Vagina (tissue), 2 donors: ENCODE measurements at regions of chr15 and their contacts with region 1.

Region 1: DNA sequence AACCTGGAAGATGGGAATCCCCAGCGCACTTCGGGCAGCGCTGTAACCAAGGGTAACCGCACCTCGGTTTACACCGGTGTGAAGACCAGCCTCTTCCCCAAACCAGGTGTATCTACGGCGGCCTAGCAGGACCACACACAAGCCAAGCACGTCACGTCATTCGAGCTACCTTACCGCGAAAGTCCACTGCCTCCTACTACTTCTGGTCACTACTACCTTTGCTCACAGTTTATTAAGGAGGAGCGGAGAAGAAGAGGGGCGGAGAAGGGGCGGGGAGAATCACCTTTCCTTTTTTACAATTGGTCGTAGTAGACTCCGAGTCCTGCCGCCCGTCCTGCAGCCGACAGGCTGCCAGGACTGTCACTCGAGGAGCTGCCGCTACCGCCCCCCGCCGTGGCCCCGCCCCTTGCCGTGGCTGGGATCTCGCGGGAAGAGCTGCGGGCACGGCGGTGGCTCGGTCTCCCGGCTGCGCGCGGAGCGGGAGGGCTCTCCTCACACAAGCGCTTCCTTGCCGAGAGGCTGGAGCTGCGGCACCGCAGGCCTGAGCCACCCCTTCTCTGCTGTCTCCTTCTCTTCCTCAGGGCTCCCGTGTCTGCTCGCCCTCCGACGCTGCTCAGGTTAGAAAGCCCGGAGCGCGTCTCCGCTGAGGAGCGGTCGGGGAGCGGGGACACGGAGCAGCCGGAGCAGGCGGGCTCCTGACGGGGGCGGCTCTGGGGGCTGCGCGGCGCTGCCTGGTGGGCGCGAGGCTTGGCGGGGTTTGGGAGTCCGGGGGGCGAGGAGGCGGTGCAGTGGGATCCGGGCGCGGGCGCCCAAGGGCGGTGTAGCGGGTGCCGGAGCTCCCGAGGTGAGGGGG is at the start of gene GLCE:
- DNase-seq: peak in 1 of 2 donors; percentile 96
- H3K4me3 ChIP-seq: peak within 1 kb of the TSS; percentile 81 to 94
- H3K27ac ChIP-seq: peak within 1 kb of the TSS; percentile 45
- H3K4me1 ChIP-seq: peaks cover 10% of the 10 kb centered on the region
- H3K27me3 ChIP-seq: no peaks in the 10 kb centered on the region
- CTCF ChIP-seq: peak in 1 of 3 experiments; percentile 1
- POLR2A ChIP-seq: peak in 1 of 2 donors; percentile 82
- total RNA-seq, gene GLCE: 16.5 TPM

Region 2: DNA sequence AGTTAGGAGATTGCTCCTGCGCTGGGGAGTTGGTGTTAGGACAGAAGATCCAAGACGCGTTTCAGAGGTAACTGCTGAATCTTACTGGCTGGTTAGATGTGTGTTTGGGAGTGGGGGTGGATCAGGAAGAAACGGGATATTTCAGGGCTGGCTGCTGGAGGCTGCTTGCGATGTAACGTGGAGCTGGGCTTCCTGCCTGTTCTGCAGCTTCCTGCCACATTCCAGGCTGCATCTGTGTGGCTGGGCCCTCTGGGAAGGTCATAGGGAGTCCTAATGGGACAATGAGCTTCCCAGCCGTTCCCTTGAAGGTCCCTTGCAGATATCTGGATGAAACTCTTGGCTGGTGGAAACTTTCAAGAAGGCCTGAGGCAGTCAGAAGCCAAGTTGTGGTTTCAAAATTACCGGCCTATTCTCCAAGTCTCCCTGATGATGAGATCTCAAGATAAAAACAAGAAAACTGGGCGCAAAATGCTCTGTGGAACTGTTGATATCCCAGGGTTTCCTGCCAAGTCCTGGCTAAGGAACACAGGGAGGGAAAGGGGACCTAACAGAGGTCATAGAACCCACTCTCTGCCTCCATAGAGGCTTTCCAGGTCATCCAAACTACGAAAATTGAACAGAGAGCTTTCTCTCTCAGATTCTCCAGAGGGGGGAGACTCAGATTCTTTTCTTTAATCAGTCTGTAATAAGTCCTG is 78.9 kb before region 1 on chr15:
- intact Hi-C with region 1: loop called (anchors 5 kb)
- DNase-seq: no peak
- H3K4me3 ChIP-seq: no peak overlapping the region
- H3K27ac ChIP-seq: peak overlapping the region; percentile 43
- H3K4me1 ChIP-seq: peaks cover 23% of the 10 kb centered on the region
- H3K27me3 ChIP-seq: no peaks in the 10 kb centered on the region
- CTCF ChIP-seq: no peak
- POLR2A ChIP-seq: no peak

Region 3: DNA sequence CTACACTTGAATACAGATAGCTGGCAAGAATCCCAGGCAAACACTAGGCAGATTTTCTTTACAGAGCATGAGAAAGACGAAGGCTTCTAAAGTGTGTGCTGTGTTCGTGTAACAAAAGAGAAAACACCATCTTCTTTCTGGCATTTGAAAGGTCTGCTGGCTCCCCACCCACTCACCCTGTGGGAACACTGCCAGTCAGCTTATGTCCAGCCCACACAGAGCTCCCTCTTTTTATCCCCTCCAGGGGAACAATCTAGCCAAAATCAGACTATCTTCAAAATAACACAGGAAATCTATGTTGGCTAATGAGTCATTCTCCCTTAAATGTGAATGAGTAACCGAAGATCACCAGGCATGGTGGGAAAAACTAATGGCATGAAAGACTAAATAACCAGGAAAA is 92.8 kb after region 1 on chr15:
- intact Hi-C with region 1: no loop called
- DNase-seq: no peak
- H3K4me3 ChIP-seq: no peak overlapping the region
- H3K27ac ChIP-seq: no peak overlapping the region
- H3K4me1 ChIP-seq: no peaks in the 10 kb centered on the region
- H3K27me3 ChIP-seq: no peaks in the 10 kb centered on the region
- CTCF ChIP-seq: no peak
- POLR2A ChIP-seq: no peak